ENCODE measurements at regions of chr5 and their contacts with region 1.

Region 1: GRCh38 chr5:902129-902916 is 9.6 kb downstream of the TRIP13 start:
- DNase-seq: no peak
- H3K4me3 ChIP-seq: no peak overlapping the region
- H3K27ac ChIP-seq: no peak overlapping the region
- H3K4me1 ChIP-seq: peaks cover 0 to 2% (median 0%) of the 10 kb centered on the region in 4 donors
- H3K27me3 ChIP-seq: no peaks in the 10 kb centered on the region
- CTCF ChIP-seq: no peak
- EP300 ChIP-seq: no peak
- POLR2A ChIP-seq: no peak

Region 2: DNA sequence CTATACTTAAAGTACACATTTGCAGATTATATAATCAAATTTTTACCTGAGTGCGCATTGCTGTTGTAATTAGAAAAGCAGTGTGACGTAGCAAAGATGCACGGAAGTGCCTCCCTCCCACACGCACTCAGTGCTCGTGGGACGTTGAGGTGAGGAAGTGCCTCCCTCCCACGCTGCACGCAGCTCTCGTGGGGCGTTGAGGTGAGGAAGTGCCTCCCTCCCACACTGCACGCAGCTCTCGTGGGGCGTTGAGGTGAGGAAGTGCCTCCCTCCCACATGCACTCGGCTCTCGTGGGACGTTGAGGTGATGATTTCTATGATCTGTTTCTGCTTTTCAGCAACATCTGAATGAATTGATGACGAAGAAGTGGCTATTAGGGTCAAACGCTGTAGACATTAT is 438.4 kb before region 1 on chr5:
- in situ Hi-C with region 1: no loop called
- intact Hi-C with region 1: loop called (anchors 10 kb)
- DNase-seq: peak; percentile 15
- H3K4me3 ChIP-seq: no peak overlapping the region
- H3K27ac ChIP-seq: no peak overlapping the region
- H3K4me1 ChIP-seq: no peaks in the 10 kb centered on the region
- H3K27me3 ChIP-seq: no peaks in the 10 kb centered on the region
- CTCF ChIP-seq: no peak
- EP300 ChIP-seq: no peak
- POLR2A ChIP-seq: no peak

Region 3: GRCh38 chr5:671459-672328 is 230.6 kb before region 1 on chr5:
- in situ Hi-C with region 1: loop called in 2 of 4 experiments (anchors 10 to 25 kb)
- intact Hi-C with region 1: loop called (anchors 2 kb)
- DNase-seq: peak; percentile 80
- H3K4me3 ChIP-seq: peak overlapping the region in 2 of 4 donors; percentile 11 to 21
- H3K27ac ChIP-seq: peak overlapping the region; percentile 7 to 61 (median 41)
- H3K4me1 ChIP-seq: peaks cover 34 to 43% (median 36%) of the 10 kb centered on the region in 4 donors
- H3K27me3 ChIP-seq: no peaks in the 10 kb centered on the region
- CTCF ChIP-seq: peak; percentile 94 to 98 (median 96)
- EP300 ChIP-seq: no peak
- POLR2A ChIP-seq: no peak

Region 4: GRCh38 chr5:1099926-1100663 is 197.8 kb after region 1 on chr5:
- in situ Hi-C with region 1: no loop called
- intact Hi-C with region 1: no loop called
- DNase-seq: no peak
- H3K4me3 ChIP-seq: no peak overlapping the region
- H3K27ac ChIP-seq: peak overlapping the region in 3 of 4 donors; percentile 12 to 19 (median 14)
- H3K4me1 ChIP-seq: peaks cover 32 to 48% (median 37%) of the 10 kb centered on the region in 4 donors
- H3K27me3 ChIP-seq: no peaks in the 10 kb centered on the region
- CTCF ChIP-seq: no peak
- EP300 ChIP-seq: no peak
- POLR2A ChIP-seq: no peak